CD8-positive, alpha-beta T cell (primary cell): ENCODE measurements at regions of chr15 and their contacts with region 1.

Region 1: DNA sequence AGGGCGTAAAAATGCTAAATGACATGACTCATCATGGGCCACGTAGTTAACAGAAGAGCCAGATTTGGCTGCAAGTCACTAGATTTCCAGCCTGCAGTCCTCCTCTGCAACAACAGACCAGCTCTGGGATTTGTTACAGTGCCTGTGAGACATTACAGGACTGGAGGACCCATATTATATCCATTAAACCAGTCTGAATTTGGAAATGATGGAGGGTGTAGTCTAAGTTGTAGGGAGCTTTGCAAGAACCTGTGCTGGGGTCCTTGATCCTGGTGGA is 10.8 kb downstream of the ZNF774 start:
- DNase-seq: no peak
- ATAC-seq: no peak
- H3K4me3 ChIP-seq: no peak overlapping the region
- H3K4me3 Mint-ChIP-seq: no peak overlapping the region
- H3K27ac ChIP-seq: no peak overlapping the region
- H3K27ac Mint-ChIP-seq: no peak overlapping the region
- H3K4me1 ChIP-seq: peaks cover 12% of the 10 kb centered on the region
- H3K4me1 Mint-ChIP-seq: peaks cover 18% of the 10 kb centered on the region
- H3K27me3 ChIP-seq: no peaks in the 10 kb centered on the region
- H3K27me3 Mint-ChIP-seq: no peaks in the 10 kb centered on the region
- CTCF ChIP-seq: no peak

Region 2: DNA sequence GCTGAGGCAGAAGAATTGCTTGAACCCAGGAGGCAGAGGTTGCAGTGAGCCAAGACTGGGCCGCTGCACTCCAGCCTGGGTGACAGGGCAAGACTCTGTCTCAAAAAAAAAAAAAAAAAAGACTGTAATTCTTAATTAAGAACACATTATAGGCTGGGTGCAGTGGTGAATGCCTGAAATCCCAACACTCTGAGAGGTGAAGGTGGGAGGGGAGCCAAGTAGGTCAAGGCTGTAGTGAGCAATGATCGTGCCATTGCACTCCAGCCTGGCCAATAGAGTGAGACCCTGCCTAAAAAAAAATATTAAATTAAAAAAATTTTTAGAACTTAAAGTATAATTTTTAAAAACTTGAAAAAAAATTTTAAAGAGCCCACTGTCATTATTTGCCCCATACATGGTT is 436.7 kb before region 1 on chr15:
- CTCF ChIA-PET with region 1: no interaction called
- POLR2A ChIA-PET with region 1: no interaction called
- intact Hi-C with region 1: no loop called
- DNase-seq: no peak
- ATAC-seq: no peak
- H3K4me3 ChIP-seq: no peak overlapping the region
- H3K4me3 Mint-ChIP-seq: no peak overlapping the region
- H3K27ac ChIP-seq: no peak overlapping the region
- H3K27ac Mint-ChIP-seq: no peak overlapping the region
- H3K4me1 ChIP-seq: no peaks in the 10 kb centered on the region
- H3K4me1 Mint-ChIP-seq: no peaks in the 10 kb centered on the region
- H3K27me3 ChIP-seq: no peaks in the 10 kb centered on the region
- H3K27me3 Mint-ChIP-seq: peaks cover 3% of the 10 kb centered on the region
- CTCF ChIP-seq: no peak

Region 3: GRCh38 chr15:90376789-90377188 is 13.9 kb after region 1 on chr15:
- CTCF ChIA-PET with region 1: interaction called, 55 read pairs
- POLR2A ChIA-PET with region 1: interaction called, 3 read pairs
- intact Hi-C with region 1: no loop called
- DNase-seq: peak; percentile 38 to 87 (median 69)
- ATAC-seq: peak; percentile 97
- H3K4me3 ChIP-seq: peak overlapping the region in 1 of 2 experiments; percentile 12
- H3K4me3 Mint-ChIP-seq: peak overlapping the region; percentile 63
- H3K27ac ChIP-seq: peak overlapping the region in 1 of 2 experiments; percentile 62
- H3K27ac Mint-ChIP-seq: peak overlapping the region; percentile 12
- H3K4me1 ChIP-seq: peaks cover 40% of the 10 kb centered on the region
- H3K4me1 Mint-ChIP-seq: peaks cover 50% of the 10 kb centered on the region
- H3K27me3 ChIP-seq: no peaks in the 10 kb centered on the region
- H3K27me3 Mint-ChIP-seq: no peaks in the 10 kb centered on the region
- CTCF ChIP-seq: no peak

Region 4: DNA sequence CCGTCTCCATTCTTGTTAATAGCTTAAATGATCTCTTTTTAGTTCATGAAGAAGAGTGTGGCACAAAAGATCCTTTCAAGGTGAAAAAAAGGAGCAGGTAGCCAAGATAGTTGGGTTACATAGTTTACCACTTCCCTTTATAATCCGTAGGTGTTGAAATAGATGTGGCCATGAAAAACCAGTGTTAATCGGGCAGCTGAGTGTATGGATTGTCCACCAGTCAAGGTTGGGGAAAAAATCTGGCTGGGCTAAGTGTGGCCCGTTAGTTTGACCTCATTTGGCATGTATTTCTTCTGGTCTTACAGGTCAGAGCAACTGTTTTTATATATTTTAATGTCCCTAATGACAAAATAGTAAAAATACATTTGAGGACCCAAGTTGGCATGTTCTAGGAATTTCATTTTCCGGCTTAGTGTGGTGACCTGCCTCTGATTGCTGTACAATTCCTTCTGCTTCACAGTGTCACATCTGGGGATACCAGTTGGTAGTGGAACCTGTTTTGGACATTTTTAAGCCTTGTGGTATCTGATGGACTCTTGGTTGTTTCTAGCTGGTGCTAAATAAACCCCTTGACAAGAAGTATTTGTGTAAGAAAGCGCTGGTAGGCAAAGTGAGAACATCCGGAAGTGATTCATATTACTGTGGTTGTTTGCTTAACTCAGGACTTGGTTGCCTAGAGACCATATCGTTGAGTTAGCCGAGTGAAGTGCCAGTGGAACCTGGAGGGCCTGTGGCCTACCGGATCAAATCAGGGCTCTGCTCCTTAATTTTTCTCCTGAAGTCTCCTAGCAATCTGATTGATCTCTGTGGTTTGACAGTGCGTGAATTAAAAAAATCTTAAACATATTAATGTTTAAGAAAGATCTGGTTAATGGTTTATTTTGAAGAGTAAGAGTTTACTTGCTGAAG is 37.8 kb after region 1 on chr15:
- CTCF ChIA-PET with region 1: interaction called, 11 read pairs
- POLR2A ChIA-PET with region 1: interaction called, 3 read pairs
- intact Hi-C with region 1: loop called in 1 of 2 experiments (anchors 1 kb)
- DNase-seq: peak; percentile 34 to 96 (median 64)
- ATAC-seq: peak; percentile 91
- H3K4me3 ChIP-seq: peak overlapping the region in 1 of 2 experiments; percentile 18
- H3K4me3 Mint-ChIP-seq: peak overlapping the region; percentile 69
- H3K27ac ChIP-seq: peak overlapping the region; percentile 74 to 96
- H3K27ac Mint-ChIP-seq: peak overlapping the region; percentile 96
- H3K4me1 ChIP-seq: peaks cover 36% of the 10 kb centered on the region
- H3K4me1 Mint-ChIP-seq: peaks cover 66% of the 10 kb centered on the region
- H3K27me3 ChIP-seq: no peaks in the 10 kb centered on the region
- H3K27me3 Mint-ChIP-seq: no peaks in the 10 kb centered on the region
- CTCF ChIP-seq: no peak

Region 5: DNA sequence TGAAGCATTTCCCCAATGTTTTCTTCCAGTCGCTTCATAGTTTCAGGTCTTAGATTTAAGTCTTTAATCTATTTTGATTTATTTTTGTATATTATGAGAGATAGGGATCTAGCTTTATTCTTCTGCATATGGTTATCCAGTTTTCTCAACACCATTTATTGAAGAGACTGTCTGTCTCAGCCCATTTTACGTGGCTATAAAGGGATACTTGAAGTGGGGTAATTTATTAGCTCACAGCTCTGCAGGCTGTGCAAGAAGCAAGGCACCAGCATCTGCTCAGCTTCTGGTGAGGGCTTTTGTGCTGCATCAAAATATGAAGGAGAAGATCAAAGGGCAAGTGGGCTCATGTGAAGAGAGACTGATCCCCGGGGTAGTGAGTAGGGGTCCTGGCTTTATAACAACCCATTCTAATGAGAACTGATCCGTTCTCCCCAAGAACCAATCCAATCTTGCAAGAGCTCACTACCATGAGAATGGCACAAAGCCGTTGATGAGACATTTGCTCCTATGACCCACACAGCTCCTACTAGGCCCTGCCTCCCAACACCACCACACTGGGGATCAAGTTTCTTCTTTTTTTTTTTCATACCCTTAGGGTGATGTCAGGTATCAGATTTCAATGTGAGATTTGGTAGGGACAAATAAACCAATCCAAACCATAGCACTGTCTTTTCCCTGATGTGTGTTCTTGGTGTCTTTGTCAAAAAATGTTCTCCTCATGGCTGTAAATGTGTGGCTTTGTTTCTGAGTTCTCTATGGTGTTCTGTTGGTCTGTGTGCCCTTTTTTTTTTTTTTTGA is 88.4 kb after region 1 on chr15:
- CTCF ChIA-PET with region 1: interaction called, 19 read pairs
- POLR2A ChIA-PET with region 1: no interaction called
- intact Hi-C with region 1: no loop called
- DNase-seq: no peak
- ATAC-seq: no peak
- H3K4me3 ChIP-seq: no peak overlapping the region
- H3K4me3 Mint-ChIP-seq: no peak overlapping the region
- H3K27ac ChIP-seq: no peak overlapping the region
- H3K27ac Mint-ChIP-seq: no peak overlapping the region
- H3K4me1 ChIP-seq: no peaks in the 10 kb centered on the region
- H3K4me1 Mint-ChIP-seq: peaks cover 4% of the 10 kb centered on the region
- H3K27me3 ChIP-seq: no peaks in the 10 kb centered on the region
- H3K27me3 Mint-ChIP-seq: no peaks in the 10 kb centered on the region
- CTCF ChIP-seq: no peak

Region 6: DNA sequence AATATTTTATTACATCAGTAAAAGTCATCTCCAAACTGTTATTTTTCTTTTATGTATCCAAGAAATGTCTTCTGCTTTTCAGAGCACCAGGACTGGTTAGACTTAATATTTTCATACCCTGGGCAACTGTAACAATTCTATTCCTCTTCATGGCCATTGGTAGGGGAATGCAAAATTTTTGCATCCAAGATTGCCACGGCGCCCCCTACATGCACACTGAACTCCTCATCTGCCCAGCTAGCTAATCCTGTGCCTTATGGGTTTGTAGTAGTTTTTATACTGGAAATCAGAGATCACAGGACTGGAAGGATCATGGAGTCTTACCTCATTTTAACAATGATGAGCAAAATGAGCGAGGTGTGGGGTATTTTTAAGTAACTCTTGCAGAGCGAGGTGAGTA is 241.0 kb after region 1 on chr15:
- CTCF ChIA-PET with region 1: interaction called, 5 read pairs
- POLR2A ChIA-PET with region 1: no interaction called
- intact Hi-C with region 1: loop called in 1 of 2 experiments (anchors 10 kb)
- DNase-seq: peak; percentile 12 to 75 (median 53)
- ATAC-seq: no peak
- H3K4me3 ChIP-seq: no peak overlapping the region
- H3K4me3 Mint-ChIP-seq: no peak overlapping the region
- H3K27ac ChIP-seq: no peak overlapping the region
- H3K27ac Mint-ChIP-seq: peak overlapping the region; percentile 17
- H3K4me1 ChIP-seq: peaks cover 28% of the 10 kb centered on the region
- H3K4me1 Mint-ChIP-seq: peaks cover 46% of the 10 kb centered on the region
- H3K27me3 ChIP-seq: no peaks in the 10 kb centered on the region
- H3K27me3 Mint-ChIP-seq: no peaks in the 10 kb centered on the region
- CTCF ChIP-seq: peak; percentile 45